Activated CD4-positive, alpha-beta memory T cell treated with anti-CD3 and anti-CD28 coated beads for 36 hours (primary cell): ENCODE measurements at regions of chr1 and their contacts with region 1.

Region 1: DNA sequence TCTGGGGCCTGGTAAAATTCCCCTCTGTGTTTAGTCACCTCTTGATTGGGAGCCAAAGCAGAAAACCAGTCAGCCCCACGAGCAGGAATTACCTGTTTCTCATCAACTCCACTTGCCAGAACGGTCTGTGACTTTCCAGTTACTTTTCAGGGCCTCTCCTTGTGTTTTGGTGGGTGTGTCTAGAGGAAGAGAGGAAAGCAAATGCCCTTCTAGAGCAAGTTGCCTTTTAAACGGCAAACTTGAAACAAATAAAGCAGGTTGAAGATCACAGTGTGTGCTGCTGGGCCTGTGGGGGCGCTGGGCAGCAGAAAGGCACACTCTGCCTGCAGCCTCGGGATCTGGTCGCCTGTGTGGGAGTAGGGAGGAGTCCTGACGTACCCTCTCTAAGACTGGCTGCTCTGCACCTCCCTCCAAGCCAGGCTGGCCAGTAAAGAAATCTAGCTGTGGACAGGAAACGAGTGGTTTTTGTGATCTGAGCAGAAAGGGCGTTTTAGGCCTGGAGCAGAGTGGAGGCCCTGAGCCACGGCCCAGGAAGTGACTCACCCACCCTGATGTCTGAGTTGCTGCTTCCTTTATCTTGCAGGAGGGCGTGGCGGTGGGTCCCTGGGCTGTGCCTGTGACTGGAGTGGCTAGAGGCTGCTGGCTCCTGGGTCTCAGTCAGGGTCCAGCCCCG is 11.1 kb upstream of the S100A11 start:
- DNase-seq: peak; percentile 94
- H3K4me3 Mint-ChIP-seq: peak overlapping the region; percentile 72
- H3K27ac Mint-ChIP-seq: peak overlapping the region; percentile 99
- H3K4me1 Mint-ChIP-seq: peaks cover 29% of the 10 kb centered on the region
- H3K27me3 Mint-ChIP-seq: peaks cover 2% of the 10 kb centered on the region

Region 2: DNA sequence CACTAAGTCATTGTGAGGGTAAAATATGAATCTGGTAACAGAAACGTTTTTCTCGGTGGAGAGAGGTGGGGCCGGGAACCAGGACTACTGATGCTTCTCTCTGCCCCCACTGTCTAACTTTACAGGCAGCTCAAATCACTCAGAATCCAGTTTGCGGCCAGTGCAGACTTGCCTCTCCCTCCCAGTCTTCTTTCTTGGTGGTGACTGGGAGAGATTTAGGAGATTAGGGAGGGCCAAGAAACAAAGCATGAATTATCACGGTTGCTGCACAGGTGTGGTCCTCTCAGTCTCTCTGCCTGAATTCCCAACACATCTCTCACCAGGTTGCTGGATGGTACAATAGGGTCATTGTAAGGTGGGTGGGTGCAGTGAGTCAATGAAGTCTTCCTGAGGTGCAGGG is 23.7 kb before region 1 on chr1:
- CTCF ChIA-PET with region 1: no interaction called
- POLR2A ChIA-PET with region 1: no interaction called
- intact Hi-C with region 1: no loop called
- DNase-seq: no peak
- H3K4me3 Mint-ChIP-seq: no peak overlapping the region
- H3K27ac Mint-ChIP-seq: no peak overlapping the region
- H3K4me1 Mint-ChIP-seq: peaks cover 16% of the 10 kb centered on the region
- H3K27me3 Mint-ChIP-seq: peaks cover 4% of the 10 kb centered on the region

Region 3: GRCh38 chr1:152110860-152111514 is 63.1 kb after region 1 on chr1:
- CTCF ChIA-PET with region 1: interaction called, 41 read pairs
- POLR2A ChIA-PET with region 1: no interaction called
- intact Hi-C with region 1: loop called (anchors 2 kb)
- DNase-seq: peak; percentile 54
- H3K4me3 Mint-ChIP-seq: no peak overlapping the region
- H3K27ac Mint-ChIP-seq: no peak overlapping the region
- H3K4me1 Mint-ChIP-seq: no peaks in the 10 kb centered on the region
- H3K27me3 Mint-ChIP-seq: peaks cover 15% of the 10 kb centered on the region

Region 4: DNA sequence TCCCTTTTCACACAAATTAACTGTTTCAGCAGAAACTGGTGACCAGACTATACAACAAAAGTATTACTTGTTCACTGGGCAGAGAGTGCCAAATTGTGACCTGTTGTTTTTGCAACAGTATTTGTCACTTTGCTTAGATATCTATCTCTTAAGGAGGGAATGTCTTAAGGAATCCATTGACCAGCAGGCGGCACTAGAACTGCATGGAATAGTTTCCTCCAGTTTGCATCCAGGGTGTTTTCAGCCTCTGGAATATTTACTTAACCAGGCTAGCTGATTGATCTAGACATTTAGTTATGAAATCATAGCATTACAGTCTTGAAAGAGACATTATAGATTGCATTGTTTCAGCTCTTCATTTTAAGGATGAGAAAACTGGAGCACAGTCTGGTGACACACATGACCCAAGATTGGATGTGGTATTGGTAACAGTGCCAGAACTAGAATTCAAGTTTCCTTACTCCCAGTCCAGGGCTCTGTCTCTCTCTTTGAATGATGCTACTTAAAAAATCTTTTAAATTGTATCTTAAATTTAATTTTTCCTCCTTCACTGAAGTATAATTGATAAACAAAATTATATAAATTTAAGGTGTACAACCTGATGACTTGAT is 94.2 kb after region 1 on chr1:
- CTCF ChIA-PET with region 1: interaction called, 8 read pairs
- POLR2A ChIA-PET with region 1: no interaction called
- intact Hi-C with region 1: loop called (anchors 2 kb)
- DNase-seq: peak; percentile 41
- H3K4me3 Mint-ChIP-seq: no peak overlapping the region
- H3K27ac Mint-ChIP-seq: no peak overlapping the region
- H3K4me1 Mint-ChIP-seq: peaks cover 5% of the 10 kb centered on the region
- H3K27me3 Mint-ChIP-seq: peaks cover 41% of the 10 kb centered on the region

Region 5: GRCh38 chr1:152347116-152347728 is 299.4 kb after region 1 on chr1:
- CTCF ChIA-PET with region 1: interaction called, 11 read pairs
- POLR2A ChIA-PET with region 1: no interaction called
- intact Hi-C with region 1: loop called (anchors 10 kb)
- DNase-seq: peak; percentile 46
- H3K4me3 Mint-ChIP-seq: no peak overlapping the region
- H3K27ac Mint-ChIP-seq: no peak overlapping the region
- H3K4me1 Mint-ChIP-seq: peaks cover 3% of the 10 kb centered on the region
- H3K27me3 Mint-ChIP-seq: peaks cover 3% of the 10 kb centered on the region

Region 6: GRCh38 chr1:152440635-152441471 is 393.0 kb after region 1 on chr1:
- CTCF ChIA-PET with region 1: interaction called, 11 read pairs
- POLR2A ChIA-PET with region 1: no interaction called
- intact Hi-C with region 1: loop called (anchors 5 kb)
- DNase-seq: peak; percentile 77
- H3K4me3 Mint-ChIP-seq: no peak overlapping the region
- H3K27ac Mint-ChIP-seq: no peak overlapping the region
- H3K4me1 Mint-ChIP-seq: no peaks in the 10 kb centered on the region
- H3K27me3 Mint-ChIP-seq: peaks cover 21% of the 10 kb centered on the region